AG04450 (cell line): ENCODE measurements at regions of chr2 and their contacts with region 1.

Region 1: DNA sequence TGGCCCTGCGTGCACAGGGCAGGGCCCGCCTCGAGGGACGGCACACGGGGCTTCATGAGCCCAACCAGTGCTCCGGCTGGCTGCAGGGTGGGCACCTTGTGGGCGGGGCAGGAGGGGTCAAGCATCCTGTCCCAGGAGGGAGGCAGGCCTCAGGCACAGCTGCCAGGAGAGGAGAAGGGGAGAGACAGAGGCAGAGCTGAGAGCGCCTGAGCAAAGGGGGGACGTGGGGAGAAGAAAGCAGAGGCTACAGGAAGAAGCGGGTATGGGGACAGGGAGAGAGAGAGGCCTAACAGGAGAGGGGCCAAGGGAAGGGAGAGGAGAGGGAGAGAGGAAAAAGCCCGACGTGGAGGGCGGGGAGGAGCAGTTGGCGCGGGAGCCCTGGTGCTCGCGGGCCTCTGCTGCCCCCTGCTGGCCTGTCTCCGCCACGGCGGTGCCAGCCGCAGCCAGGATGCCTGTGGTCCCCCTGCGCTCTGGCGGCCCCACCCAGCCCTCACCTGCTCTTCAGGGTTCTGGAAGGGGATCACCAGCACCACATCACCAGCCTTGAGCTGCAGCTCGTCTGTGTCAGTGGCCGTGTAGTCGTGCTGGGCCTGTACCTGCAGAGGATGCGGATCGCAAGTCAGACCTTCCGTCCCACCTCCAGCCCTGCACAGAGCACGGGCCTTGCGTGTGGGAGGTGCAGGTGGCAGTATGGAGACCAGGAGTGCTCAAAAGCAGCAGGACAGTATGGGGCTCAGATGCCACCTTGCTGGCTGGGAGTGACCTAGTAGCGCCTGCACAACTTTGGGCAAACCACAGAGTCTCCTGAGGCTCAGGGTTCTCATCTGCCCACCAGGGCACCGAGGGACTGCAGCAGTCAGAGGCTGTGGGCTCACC is 56.8 kb downstream of the BIN1 start:
- DNase-seq: peak; percentile 10
- H3K4me3 ChIP-seq: no peak overlapping the region
- H3K27ac ChIP-seq: no peak overlapping the region
- H3K27me3 ChIP-seq: no peaks in the 10 kb centered on the region
- CTCF ChIP-seq: peak; percentile 85

Region 2: DNA sequence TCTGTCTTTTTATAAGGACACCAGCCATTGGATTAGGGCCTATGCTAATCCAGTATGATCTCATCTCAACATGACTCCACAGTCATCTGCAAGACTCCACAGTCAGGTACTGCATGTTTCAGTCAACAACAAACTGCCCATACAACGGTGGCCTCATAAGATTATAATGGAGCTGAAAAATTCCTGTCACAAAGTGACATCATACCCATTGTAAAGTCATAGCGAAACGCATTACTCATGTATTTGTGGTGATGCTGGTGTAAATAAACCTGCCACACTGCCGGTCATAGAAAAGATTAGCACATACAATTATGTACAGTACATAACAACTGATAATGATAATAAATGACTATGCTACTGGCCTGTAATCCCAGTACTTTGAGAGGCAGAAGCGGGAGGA is 49.2 kb before region 1 on chr2:
- CTCF ChIA-PET with region 1: no interaction called
- POLR2A ChIA-PET with region 1: no interaction called
- DNase-seq: no peak
- H3K4me3 ChIP-seq: no peak overlapping the region
- H3K27ac ChIP-seq: no peak overlapping the region
- H3K27me3 ChIP-seq: peaks cover 5% of the 10 kb centered on the region
- CTCF ChIP-seq: no peak

Region 3: GRCh38 chr2:127032621-127033020 is 17.5 kb before region 1 on chr2:
- CTCF ChIA-PET with region 1: interaction called, 17 read pairs
- POLR2A ChIA-PET with region 1: no interaction called
- DNase-seq: no peak
- H3K4me3 ChIP-seq: no peak overlapping the region
- H3K27ac ChIP-seq: no peak overlapping the region
- H3K27me3 ChIP-seq: no peaks in the 10 kb centered on the region
- CTCF ChIP-seq: no peak

Region 4: GRCh38 chr2:127039387-127040031 is 10.7 kb before region 1 on chr2:
- CTCF ChIA-PET with region 1: interaction called, 17 read pairs
- POLR2A ChIA-PET with region 1: interaction called, 7 read pairs
- DNase-seq: no peak
- H3K4me3 ChIP-seq: no peak overlapping the region
- H3K27ac ChIP-seq: no peak overlapping the region
- H3K27me3 ChIP-seq: no peaks in the 10 kb centered on the region
- CTCF ChIP-seq: no peak

Region 5: GRCh38 chr2:127743477-127744026 is 693.4 kb after region 1 on chr2:
- CTCF ChIA-PET with region 1: no interaction called
- POLR2A ChIA-PET with region 1: no interaction called
- DNase-seq: no peak
- H3K4me3 ChIP-seq: no peak overlapping the region
- H3K27ac ChIP-seq: no peak overlapping the region
- H3K27me3 ChIP-seq: no peaks in the 10 kb centered on the region
- CTCF ChIP-seq: no peak; the same call in 1 of the 2 replicates